ENCODE measurements at regions of chr17 and their contacts with region 1.

Region 1: GRCh38 chr17:59004338-59005111 is 102.2 kb downstream of the TRIM37 start:
- DNase-seq: no peak
- ATAC-seq: peak; percentile 56

Region 2: GRCh38 chr17:58587702-58588254 is 416.7 kb before region 1 on chr17:
- intact Hi-C with region 1: loop called (anchors 2 kb)
- DNase-seq: no peak
- ATAC-seq: peak; percentile 54

Region 3: GRCh38 chr17:58710936-58711775 is 293.4 kb before region 1 on chr17:
- intact Hi-C with region 1: loop called (anchors 2 kb)
- DNase-seq: no peak
- ATAC-seq: no peak

Region 4: DNA sequence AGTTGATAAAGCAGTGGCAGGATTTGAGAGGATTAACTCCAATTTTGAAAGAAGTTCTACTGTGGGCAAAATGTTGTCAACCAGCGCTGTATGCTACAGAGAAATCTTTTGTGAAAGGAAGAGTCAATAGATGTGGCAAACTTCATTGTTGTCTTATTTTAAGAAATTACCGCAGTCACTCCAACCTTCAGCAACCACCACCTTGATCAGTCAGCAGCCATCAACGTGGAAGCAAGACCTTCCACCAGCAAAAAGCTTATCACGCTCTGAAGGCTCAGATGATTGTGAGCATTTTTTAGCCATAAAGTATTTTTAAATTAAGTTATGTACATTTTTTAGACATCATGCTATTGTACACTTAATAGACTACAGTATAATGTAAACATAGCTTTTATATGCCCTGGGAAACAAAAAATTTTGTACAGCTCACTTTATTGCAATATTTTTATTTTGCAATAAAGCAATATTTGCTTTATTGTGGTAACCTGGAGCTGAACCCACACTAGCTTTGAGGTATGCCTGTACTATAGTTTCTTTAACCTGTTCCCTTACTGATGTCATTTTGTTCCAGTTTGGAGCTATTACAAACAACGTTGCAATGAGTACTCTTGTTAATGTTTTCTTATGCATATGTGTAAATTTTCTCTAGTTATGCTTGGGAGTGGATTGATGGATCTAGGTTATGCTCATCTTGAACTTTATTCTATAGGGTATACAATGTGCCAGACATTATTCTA is 104.2 kb before region 1 on chr17:
- intact Hi-C with region 1: no loop called
- DNase-seq: no peak
- ATAC-seq: no peak

Region 5: GRCh38 chr17:59038734-59039133 is 34.2 kb after region 1 on chr17:
- intact Hi-C with region 1: no loop called
- DNase-seq: no peak
- ATAC-seq: no peak

Region 6: DNA sequence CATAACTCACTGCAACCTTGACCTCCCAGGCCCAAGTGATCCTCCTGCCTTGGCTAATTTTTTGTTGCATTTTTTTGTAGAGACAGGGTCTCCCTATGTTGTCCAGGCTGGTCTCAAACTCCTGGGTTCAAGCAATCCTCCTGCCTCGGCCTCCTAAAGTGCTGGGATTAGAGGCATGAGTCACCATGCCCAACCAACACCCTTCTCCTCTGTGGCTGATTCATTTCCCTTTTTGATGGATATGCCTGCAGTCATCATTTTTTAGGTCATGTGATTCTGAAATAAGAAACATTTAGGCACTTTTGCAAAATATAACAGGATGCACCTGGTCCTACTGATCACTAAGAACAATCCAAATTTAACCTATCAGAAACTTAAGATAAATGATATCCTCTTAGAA is 282.9 kb after region 1 on chr17:
- intact Hi-C with region 1: no loop called
- DNase-seq: no peak
- ATAC-seq: peak; percentile 56